IMR-90 (cell line): ENCODE measurements at regions of chr13 and their contacts with region 1.

Region 1: DNA sequence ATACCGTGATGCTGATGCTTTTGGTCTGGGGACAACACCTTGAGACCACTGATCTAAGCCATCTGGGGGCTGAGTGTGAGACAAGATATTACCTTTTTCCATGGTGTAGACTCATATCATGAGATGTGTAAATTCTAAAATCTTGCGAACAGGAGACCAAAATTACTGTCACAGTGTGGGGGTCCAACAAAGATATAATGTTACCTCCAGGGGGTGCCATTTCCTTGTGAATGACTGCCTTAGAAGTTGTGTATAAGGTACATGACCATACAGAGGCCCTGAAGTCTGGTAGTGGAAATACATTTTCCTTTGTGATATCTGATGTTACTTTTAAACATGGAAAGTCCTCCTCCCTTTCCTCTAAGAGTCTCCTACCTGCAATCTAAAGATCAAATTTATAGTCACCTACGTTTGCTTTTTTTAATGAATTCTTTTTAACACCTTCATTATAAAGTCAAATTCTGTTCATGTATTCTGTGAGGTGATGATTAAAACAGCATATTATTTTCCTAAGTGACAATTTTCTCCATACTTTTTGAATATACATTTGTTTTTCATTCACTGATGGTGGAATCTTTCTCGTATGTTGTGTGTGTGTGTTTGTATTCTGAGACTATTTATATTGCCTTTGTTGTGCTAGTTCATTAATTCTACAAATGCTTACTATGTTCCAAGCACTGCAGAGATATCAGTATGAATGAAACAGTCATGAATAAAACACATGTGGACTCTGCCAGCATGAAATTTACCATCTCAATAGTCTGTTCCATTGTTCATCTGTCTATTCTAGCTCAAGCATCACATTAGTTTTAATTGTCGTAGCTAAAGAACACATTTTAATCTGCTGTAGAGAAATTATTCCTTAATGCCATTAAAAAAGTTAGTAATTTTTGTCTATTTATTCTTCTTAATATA is 113.7 kb downstream of the RFC3 start:
- DNase-seq: peak; percentile 53
- ATAC-seq: peak; percentile 90
- H3K4me3 ChIP-seq: no peak overlapping the region
- H3K27ac ChIP-seq: no peak overlapping the region
- H3K4me1 ChIP-seq: no peaks in the 10 kb centered on the region
- H3K27me3 ChIP-seq: no peaks in the 10 kb centered on the region
- CTCF ChIP-seq: peak; percentile 59
- POLR2A ChIP-seq: no peak
- RAD21 ChIP-seq: peak; percentile 80

Region 2: GRCh38 chr13:34076943-34077703 is 145.5 kb after region 1 on chr13:
- CTCF ChIA-PET with region 1: interaction called, 4 read pairs
- POLR2A ChIA-PET with region 1: no interaction called
- dilution Hi-C with region 1: no loop called
- in situ Hi-C with region 1: no loop called
- intact Hi-C with region 1: loop called (anchors 1 kb)
- DNase-seq: peak; percentile 1
- ATAC-seq: peak; percentile 75
- H3K4me3 ChIP-seq: no peak overlapping the region
- H3K27ac ChIP-seq: no peak overlapping the region
- H3K4me1 ChIP-seq: peaks cover 2% of the 10 kb centered on the region; the same call in 1 of the 2 replicates
- H3K27me3 ChIP-seq: no peaks in the 10 kb centered on the region
- CTCF ChIP-seq: peak; percentile 51
- POLR2A ChIP-seq: no peak
- RAD21 ChIP-seq: peak; percentile 51

Region 3: GRCh38 chr13:34224877-34225276 is 293.2 kb after region 1 on chr13:
- CTCF ChIA-PET with region 1: no interaction called
- POLR2A ChIA-PET with region 1: no interaction called
- dilution Hi-C with region 1: no loop called
- in situ Hi-C with region 1: no loop called
- intact Hi-C with region 1: no loop called
- DNase-seq: no peak
- ATAC-seq: no peak
- H3K4me3 ChIP-seq: no peak overlapping the region
- H3K27ac ChIP-seq: no peak overlapping the region
- H3K4me1 ChIP-seq: no peaks in the 10 kb centered on the region
- H3K27me3 ChIP-seq: no peaks in the 10 kb centered on the region
- CTCF ChIP-seq: no peak
- POLR2A ChIP-seq: no peak
- RAD21 ChIP-seq: no peak

Region 4: DNA sequence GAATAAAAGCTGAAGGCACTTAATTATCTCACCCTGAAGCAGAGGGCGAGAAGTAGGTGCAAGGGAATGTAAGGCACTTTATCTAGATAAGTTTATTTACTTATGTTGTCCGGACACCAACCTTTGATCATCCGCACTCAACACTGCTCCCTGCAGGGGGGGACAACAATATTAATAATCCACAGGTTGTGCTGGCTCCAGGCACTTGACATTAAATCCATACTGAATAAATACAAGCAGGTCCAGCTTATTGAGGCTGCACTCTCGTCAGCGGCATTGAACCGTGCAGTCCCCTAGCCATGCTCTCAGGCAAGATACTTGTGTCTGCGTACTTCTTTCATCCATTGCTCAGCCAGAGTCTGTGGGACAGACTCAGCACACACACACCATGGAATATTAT is 635.9 kb after region 1 on chr13:
- CTCF ChIA-PET with region 1: no interaction called
- POLR2A ChIA-PET with region 1: no interaction called
- dilution Hi-C with region 1: no loop called
- in situ Hi-C with region 1: no loop called
- intact Hi-C with region 1: loop called (anchors 10 kb)
- DNase-seq: no peak
- ATAC-seq: no peak
- H3K4me3 ChIP-seq: no peak overlapping the region
- H3K27ac ChIP-seq: no peak overlapping the region
- H3K4me1 ChIP-seq: no peaks in the 10 kb centered on the region
- H3K27me3 ChIP-seq: no peaks in the 10 kb centered on the region
- CTCF ChIP-seq: no peak
- POLR2A ChIP-seq: no peak
- RAD21 ChIP-seq: no peak

Region 5: GRCh38 chr13:34941835-34942731 is 1010.4 kb after region 1 on chr13 and contains the start of gene NBEA:
- CTCF ChIA-PET with region 1: no interaction called
- POLR2A ChIA-PET with region 1: no interaction called
- dilution Hi-C with region 1: no loop called
- in situ Hi-C with region 1: no loop called
- intact Hi-C with region 1: loop called (anchors 10 kb)
- DNase-seq: peak; percentile 38
- ATAC-seq: peak; percentile 94
- H3K4me3 ChIP-seq: peak within 1 kb of the TSS; percentile 98
- H3K27ac ChIP-seq: no peak within 1 kb of the TSS
- H3K4me1 ChIP-seq: peaks cover 4% of the 10 kb centered on the region; the same call in 1 of the 2 replicates
- H3K27me3 ChIP-seq: peaks cover 14% of the 10 kb centered on the region
- CTCF ChIP-seq: no peak
- POLR2A ChIP-seq: no peak
- RAD21 ChIP-seq: no peak
- total RNA-seq, gene NBEA: 2.2 TPM in 2 replicates